Activated CD8-positive, alpha-beta T cell treated with anti-CD3 and anti-CD28 coated beads, Interleukin-2, amount 10 ng/mL, durations not matched to agents 7 days and 5 days (primary cell): ENCODE measurements at regions of chr17 and their contacts with region 1.

Region 1: DNA sequence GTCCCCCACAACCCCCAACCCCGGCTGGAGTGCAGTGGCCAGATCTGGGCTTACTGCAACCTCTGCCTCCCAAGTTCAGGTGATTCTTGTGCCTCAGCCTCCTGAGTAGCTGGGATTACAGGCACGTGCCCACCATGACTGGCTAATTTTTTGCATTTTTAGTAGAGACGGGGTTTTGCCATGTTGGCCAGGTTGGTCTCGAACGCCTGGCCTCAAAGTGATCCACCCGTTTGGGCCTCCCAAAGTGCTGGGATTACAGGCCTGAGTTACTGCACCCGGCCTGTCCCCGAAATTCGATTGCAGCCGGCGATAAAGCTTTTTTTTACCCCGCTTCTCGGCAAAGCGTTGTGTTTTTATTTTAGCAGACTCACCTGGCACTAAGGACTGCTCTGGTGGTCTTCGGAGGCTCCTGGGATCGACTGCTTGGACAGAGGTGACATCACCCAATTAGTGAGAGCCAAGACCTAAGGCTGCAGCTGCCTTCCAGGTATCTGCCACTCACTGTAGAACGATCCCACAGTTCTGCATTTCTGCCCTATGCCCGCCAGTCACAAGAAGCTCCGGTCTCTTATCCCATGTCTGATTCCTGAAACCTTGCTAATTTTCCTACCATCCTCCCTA is 82.2 kb upstream of the ARL4D start:
- DNase-seq: peak; percentile 40
- ATAC-seq: no peak
- H3K4me3 Mint-ChIP-seq: peak overlapping the region; percentile 15
- H3K27ac Mint-ChIP-seq: peak overlapping the region; percentile 67
- H3K4me1 Mint-ChIP-seq: peaks cover 18% of the 10 kb centered on the region
- H3K27me3 Mint-ChIP-seq: no peaks in the 10 kb centered on the region

Region 2: DNA sequence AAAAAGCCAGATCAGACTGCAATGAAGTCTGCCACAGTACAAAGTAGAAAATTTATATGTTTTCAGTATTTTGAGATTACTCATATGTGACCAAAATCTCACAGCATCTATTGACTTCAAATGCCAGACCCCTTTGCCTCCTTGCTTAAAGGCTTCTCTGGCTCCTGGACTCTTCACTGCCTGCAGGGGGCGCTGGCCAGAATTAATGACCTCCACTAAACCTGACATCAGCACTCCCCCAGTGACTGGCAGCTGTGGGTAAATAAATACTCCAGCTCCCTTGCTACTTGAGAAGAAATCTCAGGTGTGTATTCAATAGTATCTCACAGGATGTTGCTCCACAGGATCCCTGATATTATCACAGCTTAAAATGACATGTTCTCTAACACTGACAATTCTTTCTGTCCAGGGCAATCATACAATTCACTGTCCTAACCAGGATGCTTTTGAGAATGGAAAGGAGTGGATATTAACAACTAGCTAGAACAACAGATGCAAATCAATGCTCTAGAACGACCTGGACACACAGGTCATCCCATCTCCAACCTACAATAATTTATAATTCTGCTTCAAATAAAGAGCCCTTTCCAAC is 496.6 kb before region 1 on chr17:
- CTCF ChIA-PET with region 1: no interaction called
- POLR2A ChIA-PET with region 1: interaction called, 10 read pairs
- DNase-seq: peak; percentile 79
- ATAC-seq: no peak
- H3K4me3 Mint-ChIP-seq: no peak overlapping the region
- H3K27ac Mint-ChIP-seq: peak overlapping the region; percentile 3
- H3K4me1 Mint-ChIP-seq: peaks cover 28% of the 10 kb centered on the region
- H3K27me3 Mint-ChIP-seq: peaks cover under 1% of the 10 kb centered on the region

Region 3: GRCh38 chr17:42895185-42895555 is 421.5 kb before region 1 on chr17:
- CTCF ChIA-PET with region 1: no interaction called
- POLR2A ChIA-PET with region 1: no interaction called
- DNase-seq: no peak
- ATAC-seq: no peak
- H3K4me3 Mint-ChIP-seq: no peak overlapping the region
- H3K27ac Mint-ChIP-seq: no peak overlapping the region
- H3K4me1 Mint-ChIP-seq: no peaks in the 10 kb centered on the region
- H3K27me3 Mint-ChIP-seq: peaks cover 14% of the 10 kb centered on the region

Region 4: GRCh38 chr17:43024407-43025289 is 292.0 kb before region 1 on chr17 and contains the start of gene RND2:
- CTCF ChIA-PET with region 1: interaction called, 5 read pairs
- POLR2A ChIA-PET with region 1: interaction called, 16 read pairs
- DNase-seq: peak; percentile 85
- ATAC-seq: peak; percentile 68
- H3K4me3 Mint-ChIP-seq: peak within 1 kb of the TSS; percentile 76
- H3K27ac Mint-ChIP-seq: peak within 1 kb of the TSS; percentile 52
- H3K4me1 Mint-ChIP-seq: peaks cover 28% of the 10 kb centered on the region
- H3K27me3 Mint-ChIP-seq: peaks cover 22% of the 10 kb centered on the region
- total RNA-seq, gene RND2: not detected

Region 5: DNA sequence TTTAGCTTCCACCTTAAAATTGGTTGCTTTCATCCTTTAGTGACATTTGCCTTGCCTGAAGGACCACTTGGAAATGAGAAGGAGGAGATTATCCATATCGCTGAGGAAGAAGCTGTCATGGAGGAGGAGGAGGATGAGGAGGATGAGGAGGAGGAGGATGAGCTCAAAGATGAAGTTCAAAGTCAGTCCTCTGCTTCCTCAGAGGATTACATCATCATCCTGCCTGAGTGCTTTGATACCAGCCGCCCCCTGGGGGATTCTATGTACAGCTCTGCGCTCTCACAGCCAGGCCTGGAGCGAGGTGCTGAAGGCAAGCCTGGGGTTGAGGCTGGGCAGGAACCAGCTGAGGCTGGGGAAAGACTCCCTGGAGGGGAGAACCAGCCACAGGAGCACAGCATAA is 116.5 kb before region 1 on chr17:
- CTCF ChIA-PET with region 1: interaction called, 3 read pairs
- POLR2A ChIA-PET with region 1: interaction called, 17 read pairs
- DNase-seq: no peak
- ATAC-seq: no peak
- H3K4me3 Mint-ChIP-seq: no peak overlapping the region
- H3K27ac Mint-ChIP-seq: no peak overlapping the region
- H3K4me1 Mint-ChIP-seq: no peaks in the 10 kb centered on the region
- H3K27me3 Mint-ChIP-seq: no peaks in the 10 kb centered on the region

Region 6: DNA sequence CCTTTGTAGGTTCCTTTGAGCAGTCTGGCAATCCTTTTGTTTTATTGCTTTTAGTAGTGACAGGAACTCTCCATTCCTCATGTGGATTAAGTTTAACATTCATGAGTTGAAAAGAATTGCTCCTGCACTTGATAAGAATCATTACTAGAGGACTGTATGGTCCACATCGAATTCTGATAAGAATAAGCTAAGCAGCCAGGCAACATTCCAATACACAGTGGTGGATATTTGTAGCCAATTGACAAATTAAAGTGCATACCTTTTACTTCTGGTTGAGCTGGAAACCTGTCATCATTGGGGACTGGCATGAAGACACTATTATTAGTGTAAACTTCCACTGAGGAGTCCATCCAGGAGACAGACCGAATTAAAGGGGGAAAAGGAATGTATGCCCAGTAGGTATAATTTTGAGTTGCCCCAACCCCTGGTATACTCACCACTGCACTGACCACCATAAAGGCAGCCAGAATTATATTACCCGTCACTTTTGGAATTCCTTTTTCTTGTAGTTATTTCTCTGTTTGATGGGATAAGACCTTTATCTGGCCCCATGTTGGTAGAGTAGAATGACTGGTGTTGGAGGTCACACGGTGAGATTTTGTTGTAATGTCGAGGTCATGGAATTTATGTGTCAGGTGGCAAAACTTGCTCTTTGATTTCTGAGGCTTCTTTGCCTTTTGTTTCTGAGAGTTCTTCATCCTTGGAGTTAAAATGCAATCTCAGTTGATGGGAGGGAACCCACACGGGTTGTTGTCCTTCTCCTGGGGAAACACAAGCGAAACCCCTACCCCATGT is 10.0 kb after region 1 on chr17:
- CTCF ChIA-PET with region 1: no interaction called
- POLR2A ChIA-PET with region 1: no interaction called
- DNase-seq: no peak
- ATAC-seq: no peak
- H3K4me3 Mint-ChIP-seq: no peak overlapping the region
- H3K27ac Mint-ChIP-seq: no peak overlapping the region
- H3K4me1 Mint-ChIP-seq: no peaks in the 10 kb centered on the region
- H3K27me3 Mint-ChIP-seq: peaks cover 23% of the 10 kb centered on the region

Region 7: DNA sequence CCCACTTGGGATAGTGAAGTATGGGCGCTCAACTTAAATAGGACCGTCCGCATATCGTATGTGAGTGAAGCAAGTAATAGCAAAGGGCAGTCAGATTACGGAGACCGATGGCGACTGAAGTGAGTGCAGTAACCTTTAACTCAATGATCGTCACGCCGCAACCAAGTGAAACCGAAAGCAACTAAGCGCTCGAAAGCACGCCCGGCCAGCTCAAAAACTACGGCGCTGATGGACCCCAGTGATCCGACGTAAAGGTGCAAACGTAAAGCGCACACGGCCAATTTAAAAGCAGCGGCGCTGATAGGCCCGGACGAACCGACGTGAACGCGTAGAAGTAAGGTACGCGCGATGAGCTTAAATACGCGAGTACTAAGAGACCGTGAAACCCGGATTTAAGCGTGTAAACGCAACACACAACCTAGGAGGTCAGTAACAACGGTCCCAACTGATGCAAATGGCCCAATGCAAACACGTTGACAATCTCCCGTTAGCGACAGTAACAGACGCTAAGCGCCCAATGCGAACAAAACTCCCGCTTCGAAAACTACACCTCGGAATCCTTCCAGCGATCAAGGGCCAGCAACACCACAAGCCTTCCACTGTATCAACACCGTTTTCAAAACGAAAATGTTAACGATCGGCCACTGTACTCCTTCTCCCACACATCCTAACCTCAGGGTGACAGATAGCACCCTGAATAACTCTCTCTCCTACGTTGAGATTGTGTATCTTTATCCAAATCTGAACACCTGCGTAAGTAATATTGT is 44.3 kb after region 1 on chr17:
- CTCF ChIA-PET with region 1: no interaction called
- POLR2A ChIA-PET with region 1: interaction called, 134 read pairs
- DNase-seq: peak; percentile 97
- ATAC-seq: peak; percentile 83
- H3K4me3 Mint-ChIP-seq: peak overlapping the region; percentile 91
- H3K27ac Mint-ChIP-seq: peak overlapping the region; percentile 100
- H3K4me1 Mint-ChIP-seq: peaks cover 40% of the 10 kb centered on the region
- H3K27me3 Mint-ChIP-seq: no peaks in the 10 kb centered on the region

Region 8: DNA sequence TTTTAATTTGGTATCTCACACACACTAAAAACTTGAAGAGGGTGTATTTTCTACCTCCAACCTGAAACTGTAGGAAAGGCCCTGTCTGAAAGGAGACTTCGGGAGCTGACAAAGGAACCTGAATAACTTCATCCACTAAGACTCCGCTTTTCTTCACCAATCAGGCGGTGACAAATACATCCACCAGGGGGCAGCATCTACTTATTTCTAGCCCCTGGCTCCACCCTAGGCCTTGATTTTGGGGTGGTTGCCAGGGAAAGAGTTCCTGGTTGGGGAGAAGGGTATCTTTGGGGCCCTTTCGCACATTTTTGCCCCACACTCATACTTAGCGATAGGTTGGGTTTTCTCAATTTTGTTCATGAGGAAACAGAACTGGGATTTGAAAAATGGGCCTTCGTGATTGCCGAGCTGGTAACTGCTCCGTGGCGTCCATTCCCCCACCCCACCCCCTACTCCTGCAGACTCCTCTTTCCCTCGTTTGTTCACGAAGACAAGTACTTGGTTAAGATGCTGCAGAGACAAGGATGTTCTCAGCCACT is 77.4 kb after region 1 on chr17:
- CTCF ChIA-PET with region 1: no interaction called
- POLR2A ChIA-PET with region 1: interaction called, 17 read pairs
- DNase-seq: peak; percentile 95
- ATAC-seq: peak; percentile 61
- H3K4me3 Mint-ChIP-seq: no peak overlapping the region
- H3K27ac Mint-ChIP-seq: peak overlapping the region; percentile 10
- H3K4me1 Mint-ChIP-seq: peaks cover 47% of the 10 kb centered on the region
- H3K27me3 Mint-ChIP-seq: no peaks in the 10 kb centered on the region